Psoas muscle (tissue), 8 donors: ENCODE measurements at regions of chr9 and their contacts with region 1.

Region 1: DNA sequence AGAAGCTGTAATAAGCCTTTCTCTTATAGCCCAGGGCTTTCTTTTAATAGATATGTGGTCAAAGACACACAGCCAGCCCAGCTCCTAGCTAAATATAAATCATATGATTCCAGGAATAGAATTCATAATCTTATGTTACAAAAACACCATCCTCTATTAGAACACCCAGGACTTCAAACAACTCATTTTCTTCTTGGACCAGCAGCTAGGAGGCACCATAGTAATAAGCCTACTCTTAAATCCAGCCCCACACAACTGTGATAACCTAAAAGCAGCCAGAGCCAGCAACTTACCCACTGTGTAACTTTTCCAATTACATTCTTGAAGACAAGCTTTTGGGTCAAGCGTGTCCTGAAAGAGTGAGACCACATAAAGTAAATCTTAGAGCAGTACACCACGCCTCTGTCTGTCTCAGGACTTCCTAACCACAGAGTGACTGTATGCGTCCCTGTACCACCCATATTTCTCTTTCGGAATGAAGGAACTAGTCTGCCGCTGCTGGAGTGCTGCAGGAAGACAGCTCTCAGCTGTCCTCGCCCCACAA is 223.8 kb downstream of the TLE1 start:
- DNase-seq: no peak
- ATAC-seq: peak; percentile 82 to 92 (median 88)
- H3K4me3 ChIP-seq: peak overlapping the region; percentile 42
- H3K27ac ChIP-seq: peak overlapping the region; percentile 83
- H3K4me1 ChIP-seq: peaks cover 16% of the 10 kb centered on the region
- H3K27me3 ChIP-seq: no peaks in the 10 kb centered on the region
- CTCF ChIP-seq: peak; percentile 42

Region 2: GRCh38 chr9:81374459-81375186 is 90.9 kb before region 1 on chr9:
- intact Hi-C with region 1: loop called in 1 of 2 experiments (anchors 5 kb)
- DNase-seq: no peak
- ATAC-seq: no peak
- H3K4me3 ChIP-seq: no peak overlapping the region
- H3K27ac ChIP-seq: no peak overlapping the region
- H3K4me1 ChIP-seq: peaks cover 15% of the 10 kb centered on the region
- H3K27me3 ChIP-seq: no peaks in the 10 kb centered on the region
- CTCF ChIP-seq: no peak

Region 3: GRCh38 chr9:81416451-81417298 is 48.9 kb before region 1 on chr9:
- intact Hi-C with region 1: loop called (anchors 5 kb)
- DNase-seq: no peak
- ATAC-seq: peak; percentile 96 to 99 (median 96)
- H3K4me3 ChIP-seq: no peak overlapping the region
- H3K27ac ChIP-seq: peak overlapping the region; percentile 81
- H3K4me1 ChIP-seq: peaks cover 26% of the 10 kb centered on the region
- H3K27me3 ChIP-seq: no peaks in the 10 kb centered on the region
- CTCF ChIP-seq: no peak

Region 4: DNA sequence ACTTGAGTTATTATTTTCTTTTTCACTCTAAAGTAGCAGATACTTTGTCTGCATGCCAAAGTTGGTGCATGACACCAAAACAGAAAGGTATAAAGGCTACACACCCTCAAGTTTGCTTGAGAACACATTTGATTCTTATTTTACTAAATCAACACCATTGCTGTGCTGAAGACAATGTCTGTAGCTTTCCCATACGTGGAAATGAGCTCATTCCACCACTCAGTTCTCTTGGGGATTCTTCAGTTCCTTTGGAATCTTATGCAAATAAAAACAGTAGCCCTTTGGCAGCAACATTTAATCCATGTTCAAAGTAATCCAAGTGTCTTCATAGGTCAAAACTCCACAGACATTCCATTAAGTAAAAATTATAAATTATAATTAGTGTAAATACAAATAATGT is 41.1 kb before region 1 on chr9:
- intact Hi-C with region 1: loop called (anchors 5 kb)
- DNase-seq: no peak
- ATAC-seq: no peak
- H3K4me3 ChIP-seq: no peak overlapping the region
- H3K27ac ChIP-seq: no peak overlapping the region
- H3K4me1 ChIP-seq: no peaks in the 10 kb centered on the region
- H3K27me3 ChIP-seq: no peaks in the 10 kb centered on the region
- CTCF ChIP-seq: no peak